Transverse colon (tissue), 4 donors: ENCODE measurements at regions of chr16 and their contacts with region 1.

Region 1: DNA sequence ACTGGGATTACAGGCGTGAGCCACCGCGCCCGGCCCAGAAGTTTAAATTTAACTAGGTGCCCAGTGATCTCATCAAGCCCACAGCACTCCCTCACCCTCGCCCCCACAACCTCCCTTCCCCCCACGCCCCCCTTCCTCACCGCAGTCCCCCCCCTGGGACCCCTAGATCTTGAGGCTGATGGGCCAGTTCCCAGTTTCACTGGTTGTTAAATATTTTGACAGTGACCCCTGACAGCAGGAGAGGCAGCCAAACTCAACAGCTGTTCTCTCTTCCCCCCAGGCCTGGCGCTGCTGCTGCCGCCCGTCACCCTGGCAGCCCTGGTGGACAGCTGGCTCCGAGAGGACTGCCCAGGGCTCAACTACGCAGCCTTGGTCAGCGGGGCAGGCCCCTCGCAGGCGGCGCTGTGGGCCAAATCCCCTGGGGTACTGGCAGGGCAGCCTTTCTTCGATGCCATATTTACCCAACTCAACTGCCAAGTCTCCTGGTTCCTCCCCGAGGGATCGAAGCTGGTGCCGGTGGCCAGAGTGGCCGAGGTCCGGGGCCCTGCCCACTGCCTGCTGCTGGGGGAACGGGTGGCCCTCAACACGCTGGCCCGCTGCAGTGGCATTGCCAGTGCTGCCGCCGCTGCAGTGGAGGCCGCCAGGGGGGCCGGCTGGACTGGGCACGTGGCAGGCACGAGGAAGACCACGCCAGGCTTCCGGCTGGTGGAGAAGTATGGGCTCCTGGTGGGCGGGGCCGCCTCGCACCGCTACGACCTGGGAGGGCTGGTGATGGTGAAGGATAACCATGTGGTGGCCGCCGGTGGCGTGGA is 15.6 kb downstream of the QPRT start:
- DNase-seq: no peak
- H3K4me3 ChIP-seq: no peak overlapping the region
- H3K27ac ChIP-seq: no peak overlapping the region
- H3K4me1 ChIP-seq: no peaks in the 10 kb centered on the region
- H3K27me3 ChIP-seq: no peaks in the 10 kb centered on the region
- CTCF ChIP-seq: no peak
- EP300 ChIP-seq: no peak
- POLR2A ChIP-seq: no peak

Region 2: GRCh38 chr16:29678691-29679267 is 15.8 kb before region 1 on chr16 and contains the start of gene QPRT:
- in situ Hi-C with region 1: no loop called
- intact Hi-C with region 1: no loop called
- DNase-seq: peak; percentile 71
- H3K4me3 ChIP-seq: peak within 1 kb of the TSS; percentile 10 to 50 (median 30)
- H3K27ac ChIP-seq: peak within 1 kb of the TSS; percentile 83 to 85 (median 83)
- H3K4me1 ChIP-seq: peaks cover 6 to 42% (median 24%) of the 10 kb centered on the region in 4 donors
- H3K27me3 ChIP-seq: no peaks in the 10 kb centered on the region
- CTCF ChIP-seq: no peak
- EP300 ChIP-seq: no peak
- POLR2A ChIP-seq: no peak
- total RNA-seq, gene QPRT: 14.3 to 65.8 (median 26.3) TPM

Region 3: DNA sequence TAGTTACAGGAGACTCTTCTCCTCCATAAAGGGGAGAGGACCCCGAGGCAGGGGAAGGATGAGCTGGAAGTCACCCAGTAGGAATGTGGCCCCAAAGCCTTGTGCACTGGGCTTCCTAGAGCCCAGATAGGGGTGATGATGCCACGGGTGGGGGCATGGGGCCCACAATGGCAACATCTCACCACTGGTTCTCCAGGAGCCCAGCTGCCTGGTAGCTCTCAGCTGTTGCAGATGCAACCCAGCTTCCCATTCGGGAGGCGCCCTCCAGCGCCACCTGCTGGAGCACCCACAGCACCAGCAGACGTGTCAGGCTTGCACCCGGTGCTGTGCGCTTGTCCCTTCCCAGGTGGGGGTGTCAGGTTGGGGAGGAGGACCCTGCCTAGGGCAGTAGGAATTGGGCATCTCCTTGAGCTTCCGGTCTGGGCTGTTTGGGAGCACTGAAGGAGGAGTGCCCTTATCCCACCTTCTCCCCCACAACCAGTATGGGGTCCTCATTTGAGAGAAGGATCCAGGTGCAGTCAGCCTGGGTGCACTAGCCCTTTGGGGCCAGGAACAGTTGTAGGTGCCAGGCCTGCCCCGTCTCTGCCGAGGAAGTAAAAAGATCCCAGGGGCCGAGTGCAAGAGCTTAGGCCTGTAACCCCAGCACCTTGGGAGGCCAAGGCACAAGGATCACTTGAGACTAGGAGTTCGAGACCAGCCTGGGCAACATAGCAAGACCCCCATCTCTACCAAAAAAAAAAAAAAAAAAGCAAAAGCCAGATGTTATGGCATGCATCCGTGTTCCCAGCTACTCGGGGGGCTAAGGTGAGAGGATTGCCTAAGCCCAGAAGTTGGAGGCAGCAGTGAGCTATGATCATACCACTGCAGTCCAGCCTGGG is 154.1 kb after region 1 on chr16:
- in situ Hi-C with region 1: loop called in 1 of 4 experiments (anchors 10 kb)
- intact Hi-C with region 1: no loop called
- DNase-seq: peak; percentile 88
- H3K4me3 ChIP-seq: no peak overlapping the region
- H3K27ac ChIP-seq: no peak overlapping the region
- H3K4me1 ChIP-seq: no peaks in the 10 kb centered on the region
- H3K27me3 ChIP-seq: no peaks in the 10 kb centered on the region
- CTCF ChIP-seq: peak; percentile 87 to 93 (median 88)
- EP300 ChIP-seq: no peak
- POLR2A ChIP-seq: no peak

Region 4: DNA sequence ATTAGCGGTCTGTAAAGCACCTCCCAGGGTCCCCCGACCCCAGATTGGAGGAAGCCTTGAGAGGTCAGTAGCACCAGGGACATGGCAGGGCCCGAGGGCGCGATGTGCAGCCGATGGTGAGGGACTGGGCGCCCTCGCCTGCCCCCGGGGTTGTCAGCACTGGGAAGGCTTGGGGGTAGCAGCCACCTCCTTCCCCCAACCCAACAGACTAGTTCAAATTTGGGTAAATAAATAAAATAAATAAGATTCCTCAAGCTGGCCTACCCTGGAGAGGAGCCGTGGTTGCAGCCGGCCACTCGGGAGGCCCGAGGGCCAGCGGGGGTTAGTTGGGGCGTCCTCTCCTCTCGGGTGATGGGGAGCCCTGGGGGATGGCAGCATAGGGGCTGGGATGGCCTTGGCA is 329.9 kb after region 1 on chr16:
- in situ Hi-C with region 1: loop called (anchors 10 to 25 kb)
- intact Hi-C with region 1: loop called (anchors 5 kb)
- DNase-seq: no peak
- H3K4me3 ChIP-seq: no peak overlapping the region
- H3K27ac ChIP-seq: no peak overlapping the region
- H3K4me1 ChIP-seq: peaks cover 0 to 10% (median 4%) of the 10 kb centered on the region in 4 donors
- H3K27me3 ChIP-seq: peaks cover 46% of the 10 kb centered on the region
- CTCF ChIP-seq: no peak
- EP300 ChIP-seq: no peak
- POLR2A ChIP-seq: no peak

Region 5: DNA sequence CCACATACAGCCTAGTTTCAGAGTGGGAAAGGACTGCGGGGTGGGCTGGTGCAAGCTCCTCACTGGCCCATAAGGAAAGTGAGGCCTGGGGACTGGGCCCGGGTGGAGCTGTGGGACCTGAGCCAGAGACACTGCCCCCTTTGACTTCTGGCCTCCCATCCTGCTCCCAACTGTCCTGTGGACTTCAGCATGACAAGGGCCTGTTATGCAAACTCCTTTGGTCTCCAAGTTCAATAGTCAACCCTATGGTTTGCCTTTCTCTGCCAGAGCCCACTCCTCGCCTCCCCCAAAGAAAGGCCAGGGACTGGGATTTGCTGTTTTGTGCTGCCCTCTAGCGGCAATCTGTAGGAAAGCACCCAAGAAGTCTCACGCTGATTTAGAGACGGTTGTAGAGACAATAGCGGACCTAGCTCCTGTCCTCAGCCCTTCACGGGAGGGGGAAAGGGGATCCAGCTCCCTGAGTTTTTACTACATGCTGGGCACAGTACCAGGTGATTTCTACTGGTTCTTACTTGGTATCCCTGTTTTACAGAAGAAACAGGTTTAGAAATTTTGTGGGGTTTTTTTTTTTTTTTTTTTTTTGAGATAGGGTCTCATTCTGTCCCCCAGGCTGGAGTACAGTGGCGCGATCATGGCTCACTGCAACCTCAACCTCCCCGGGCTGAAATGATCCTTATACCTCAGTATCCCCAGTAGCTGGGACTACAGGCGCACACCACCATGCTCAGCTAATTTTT is 337.7 kb after region 1 on chr16:
- in situ Hi-C with region 1: loop called in 3 of 4 experiments (anchors 10 kb)
- intact Hi-C with region 1: no loop called
- DNase-seq: peak; percentile 57
- H3K4me3 ChIP-seq: no peak overlapping the region
- H3K27ac ChIP-seq: no peak overlapping the region
- H3K4me1 ChIP-seq: peaks cover 0 to 9% (median 4%) of the 10 kb centered on the region in 4 donors
- H3K27me3 ChIP-seq: peaks cover 91% of the 10 kb centered on the region
- CTCF ChIP-seq: peak; percentile 57 to 71 (median 69)
- EP300 ChIP-seq: no peak
- POLR2A ChIP-seq: no peak